Caco-2 (cell line): ENCODE measurements at regions of chr9 and their contacts with region 1.

Region 1: DNA sequence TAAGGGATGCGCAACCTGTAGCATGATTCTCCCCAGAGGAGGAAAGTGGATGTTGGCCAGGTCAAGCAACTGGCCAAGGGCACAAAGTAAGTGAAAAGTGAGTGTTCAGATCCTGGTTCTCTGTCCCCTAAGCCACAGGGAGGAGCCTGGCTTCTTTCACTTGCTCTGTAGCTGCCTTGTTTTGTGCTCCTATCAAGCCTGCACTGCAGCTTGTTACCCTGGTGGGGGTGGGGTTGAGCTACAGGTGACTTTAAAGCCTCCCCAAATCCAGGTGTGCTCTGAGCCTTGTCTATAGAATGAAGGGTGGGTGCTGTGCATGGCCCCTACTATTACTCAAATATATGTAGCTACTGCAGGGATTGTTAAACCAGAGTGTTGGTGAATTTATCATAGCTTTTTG is 32.9 kb downstream of the RALGPS1 start:
- DNase-seq: peak; percentile 59 to 61
- H3K4me3 ChIP-seq: no peak overlapping the region
- H3K4me3 Mint-ChIP-seq: no peak overlapping the region
- H3K27ac Mint-ChIP-seq: no peak overlapping the region
- H3K4me1 ChIP-seq: 0 out of 2 replicates have a peak, but pooled peaks cover 8% of the 10 kb centered on the region
- H3K4me1 Mint-ChIP-seq: peaks cover 10% of the 10 kb centered on the region
- H3K27me3 ChIP-seq: no peaks in the 10 kb centered on the region
- H3K27me3 Mint-ChIP-seq: no peaks in the 10 kb centered on the region
- CTCF ChIP-seq: peak in 1 of 2 experiments; percentile 39

Region 2: GRCh38 chr9:126652140-126652558 is 295.4 kb before region 1 on chr9:
- CTCF ChIA-PET with region 1: no interaction called
- POLR2A ChIA-PET with region 1: no interaction called
- intact Hi-C with region 1: no loop called
- DNase-seq: peak; percentile 89 to 94
- H3K4me3 ChIP-seq: no peak overlapping the region
- H3K4me3 Mint-ChIP-seq: peak overlapping the region; percentile 49
- H3K27ac Mint-ChIP-seq: peak overlapping the region; percentile 48
- H3K4me1 ChIP-seq: peaks cover 44% of the 10 kb centered on the region
- H3K4me1 Mint-ChIP-seq: peaks cover 56% of the 10 kb centered on the region
- H3K27me3 ChIP-seq: no peaks in the 10 kb centered on the region
- H3K27me3 Mint-ChIP-seq: no peaks in the 10 kb centered on the region
- CTCF ChIP-seq: no peak

Region 3: DNA sequence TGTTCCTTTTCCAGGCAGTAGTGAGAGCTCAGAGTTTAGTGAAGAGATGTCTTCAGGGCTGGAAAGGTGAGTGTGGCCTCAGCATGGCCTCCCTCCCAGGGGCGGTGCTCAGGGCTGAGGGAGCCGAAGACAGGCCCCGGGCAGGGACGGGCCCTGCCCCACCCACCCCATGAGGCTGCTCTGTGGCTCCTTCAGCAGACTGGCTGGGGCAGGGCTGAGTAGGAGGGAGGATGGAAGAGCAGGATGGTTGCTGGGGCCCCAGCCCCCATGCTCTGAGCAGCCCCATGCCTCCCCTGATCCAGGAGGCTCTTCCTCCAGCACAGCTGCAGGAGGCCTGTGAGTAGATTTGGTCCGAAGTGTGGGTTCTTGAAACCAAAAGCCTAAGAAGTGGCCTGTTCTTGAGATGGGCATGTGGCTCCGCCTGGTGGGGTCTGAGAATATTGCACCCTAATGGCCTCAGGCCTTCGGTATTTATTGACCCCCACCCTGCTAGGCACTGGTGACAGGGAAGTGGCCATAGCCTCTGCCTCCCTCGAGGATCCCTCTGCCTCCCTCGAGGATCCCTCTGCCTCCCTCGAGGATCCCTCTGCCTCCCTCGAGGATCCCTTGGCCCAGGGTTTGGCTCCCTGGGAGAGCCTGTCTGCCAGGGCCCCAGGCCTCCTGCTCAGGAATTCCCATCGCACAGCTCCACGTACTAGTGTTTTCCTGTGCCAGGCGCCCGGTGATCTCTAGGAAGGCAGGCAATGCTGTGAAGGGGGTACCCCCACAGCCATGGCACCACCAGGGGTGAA is 251.7 kb after region 1 on chr9:
- CTCF ChIA-PET with region 1: interaction called, 8 read pairs
- POLR2A ChIA-PET with region 1: no interaction called
- intact Hi-C with region 1: loop called (anchors 1 kb)
- DNase-seq: peak; percentile 78 to 84
- H3K4me3 ChIP-seq: no peak overlapping the region
- H3K4me3 Mint-ChIP-seq: no peak overlapping the region
- H3K27ac Mint-ChIP-seq: peak overlapping the region; percentile 61
- H3K4me1 ChIP-seq: peaks cover 6% of the 10 kb centered on the region; the same call in 1 of the 2 replicates
- H3K4me1 Mint-ChIP-seq: peaks cover 10% of the 10 kb centered on the region
- H3K27me3 ChIP-seq: no peaks in the 10 kb centered on the region
- H3K27me3 Mint-ChIP-seq: no peaks in the 10 kb centered on the region
- CTCF ChIP-seq: peak; percentile 78 to 93